ENCODE measurements at regions of chr7 and their contacts with region 1.

Region 1: DNA sequence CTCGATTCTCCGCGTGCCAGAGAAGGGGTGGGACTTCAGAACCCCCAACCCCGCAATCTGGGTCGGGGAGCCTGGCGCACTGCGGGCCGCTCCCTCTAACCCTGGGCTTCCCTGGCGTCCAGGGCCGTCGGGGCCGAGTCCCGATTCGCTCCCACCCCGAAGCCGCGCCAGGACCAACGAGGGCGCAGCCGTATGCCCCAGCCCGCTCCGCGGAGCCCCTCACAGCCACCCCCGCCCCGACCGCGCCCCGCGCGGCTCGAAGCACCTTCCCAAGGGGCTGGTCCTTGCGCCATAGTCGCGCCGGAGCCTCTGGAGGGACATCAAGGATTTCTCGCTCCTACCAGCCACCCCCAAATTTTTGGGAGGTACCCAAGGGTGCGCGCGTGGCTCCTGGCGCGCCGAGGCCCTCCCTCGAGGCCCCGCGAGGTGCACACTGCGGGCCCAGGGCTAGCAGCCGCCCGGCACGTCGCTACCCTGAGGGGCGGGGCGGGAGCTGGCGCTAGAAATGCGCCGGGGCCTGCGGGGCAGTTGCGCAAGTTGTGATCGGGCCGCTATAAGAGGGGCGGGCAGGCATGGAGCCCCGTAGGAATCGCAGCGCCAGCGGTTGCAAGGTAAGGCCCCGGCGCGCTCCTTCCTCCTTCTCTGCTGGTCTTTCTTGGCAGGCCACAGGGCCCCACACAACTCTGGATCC is at the start of gene LEP:
- DNase-seq: no peak
- ATAC-seq: no peak
- H3K4me3 ChIP-seq: no peak within 1 kb of the TSS
- H3K27ac ChIP-seq: no peak within 1 kb of the TSS
- H3K4me1 ChIP-seq: peaks cover 0 to 9% of the 10 kb centered on the region in 2 experiments; a peak in 2 of 4 replicates
- H3K27me3 ChIP-seq: no peaks in the 10 kb centered on the region
- CTCF ChIP-seq: no peak
- POLR2A ChIP-seq: no peak
- RAD21 ChIP-seq: no peak
- total RNA-seq, gene LEP: not detected

Region 2: DNA sequence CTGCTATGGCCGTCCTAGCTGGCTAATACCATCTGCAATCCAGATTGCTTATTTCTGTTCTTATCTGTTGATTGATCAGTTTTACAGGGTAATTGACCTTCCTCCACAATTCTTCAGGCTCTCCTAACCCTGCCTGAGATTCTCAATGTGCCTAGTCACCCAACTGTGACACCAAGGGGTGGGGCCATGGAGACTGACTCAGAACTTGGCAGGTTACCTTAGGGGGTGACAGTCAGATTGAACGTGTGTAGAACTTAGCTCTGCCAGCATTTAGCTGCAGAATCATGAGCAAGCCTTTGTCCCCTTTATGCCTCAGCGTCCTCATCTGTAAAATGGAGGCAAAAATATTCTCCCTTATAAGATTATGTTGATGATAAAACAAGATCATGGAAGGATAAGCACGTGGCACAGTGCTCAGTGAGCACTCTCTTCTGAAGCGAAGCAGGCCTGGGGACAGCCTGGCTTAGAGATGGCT is 18.9 kb before region 1 on chr7:
- CTCF ChIA-PET with region 1: no interaction called
- POLR2A ChIA-PET with region 1: no interaction called
- RAD21 ChIA-PET with region 1: no interaction called
- intact Hi-C with region 1: loop called (anchors 1 kb)
- DNase-seq: peak; percentile 47
- ATAC-seq: peak; percentile 94
- H3K4me3 ChIP-seq: 0 out of 4 replicates have a peak overlapping the region, but pooled peaks of 1 of the 2 experiments have one; percentile 9
- H3K27ac ChIP-seq: no peak overlapping the region
- H3K4me1 ChIP-seq: peaks cover 6 to 15% of the 10 kb centered on the region in 2 experiments
- H3K27me3 ChIP-seq: no peaks in the 10 kb centered on the region
- CTCF ChIP-seq: no peak
- POLR2A ChIP-seq: no peak
- RAD21 ChIP-seq: no peak

Measured in HCT116 (cell line).